AG04450 (cell line): ENCODE measurements at regions of chr22 and their contacts with region 1.

Region 1: GRCh38 chr22:36065775-36066559 is 37.3 kb upstream of the RBFOX2 start:
- DNase-seq: peak; percentile 87
- H3K4me3 ChIP-seq: peak overlapping the region; percentile 65
- H3K27ac ChIP-seq: peak overlapping the region; percentile 78
- H3K27me3 ChIP-seq: no peaks in the 10 kb centered on the region
- CTCF ChIP-seq: peak; percentile 96

Region 2: GRCh38 chr22:35627264-35628041 is 438.5 kb before region 1 on chr22:
- CTCF ChIA-PET with region 1: interaction called, 12 read pairs
- POLR2A ChIA-PET with region 1: interaction called, 3 read pairs
- DNase-seq: peak; percentile 66
- H3K4me3 ChIP-seq: peak overlapping the region; percentile 65
- H3K27ac ChIP-seq: peak overlapping the region; percentile 85
- H3K27me3 ChIP-seq: no peaks in the 10 kb centered on the region
- CTCF ChIP-seq: peak; percentile 52

Region 3: DNA sequence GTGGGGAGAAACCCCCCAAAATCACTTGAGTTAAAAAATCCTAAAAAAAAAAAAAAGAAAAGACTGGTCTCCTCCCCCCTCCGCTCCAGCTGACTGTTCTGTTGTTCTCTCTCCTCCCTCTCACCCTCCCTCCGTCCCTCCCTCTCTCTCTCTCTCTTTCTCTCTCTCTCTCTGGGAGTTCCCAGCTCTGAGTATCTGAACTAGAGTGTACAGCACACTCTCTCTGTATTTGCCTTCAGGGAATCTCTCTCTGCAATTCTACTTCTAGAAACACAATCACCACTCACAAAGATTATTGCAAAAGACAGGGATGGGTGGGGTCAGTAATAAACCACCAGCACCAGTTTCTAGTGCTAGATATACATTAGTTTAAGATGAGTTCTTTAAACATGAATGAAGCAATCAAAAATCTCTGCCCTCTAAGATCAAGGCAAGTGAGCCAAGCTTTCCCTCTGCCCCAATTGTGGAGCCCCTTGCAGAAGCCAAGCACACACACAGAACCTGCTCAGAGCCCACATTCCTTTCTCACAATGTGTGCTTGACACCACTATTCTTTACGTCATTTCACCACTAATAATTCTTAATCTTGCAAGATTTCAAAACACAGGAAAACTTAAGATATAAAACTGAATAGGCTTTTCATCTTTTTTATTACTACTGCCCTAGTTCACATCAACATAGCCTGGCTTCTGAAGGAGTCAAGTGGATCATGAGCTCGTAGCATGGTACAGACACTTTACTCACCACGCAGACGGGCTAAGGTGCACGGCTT is 170.8 kb before region 1 on chr22:
- CTCF ChIA-PET with region 1: interaction called, 25 read pairs
- POLR2A ChIA-PET with region 1: interaction called, 4 read pairs
- DNase-seq: peak; percentile 29
- H3K4me3 ChIP-seq: no peak overlapping the region
- H3K27ac ChIP-seq: no peak overlapping the region
- H3K27me3 ChIP-seq: no peaks in the 10 kb centered on the region
- CTCF ChIP-seq: no peak

Region 4: GRCh38 chr22:35938226-35938625 is 127.7 kb before region 1 on chr22:
- CTCF ChIA-PET with region 1: interaction called, 37 read pairs
- POLR2A ChIA-PET with region 1: no interaction called
- DNase-seq: no peak
- H3K4me3 ChIP-seq: no peak overlapping the region
- H3K27ac ChIP-seq: no peak overlapping the region
- H3K27me3 ChIP-seq: no peaks in the 10 kb centered on the region
- CTCF ChIP-seq: no peak

Region 5: GRCh38 chr22:35995772-35996171 is 70.2 kb before region 1 on chr22:
- CTCF ChIA-PET with region 1: interaction called, 28 read pairs
- POLR2A ChIA-PET with region 1: interaction called, 7 read pairs
- DNase-seq: peak; percentile 98
- H3K4me3 ChIP-seq: peak overlapping the region; percentile 35
- H3K27ac ChIP-seq: peak overlapping the region; percentile 85
- H3K27me3 ChIP-seq: no peaks in the 10 kb centered on the region
- CTCF ChIP-seq: no peak

Region 6: DNA sequence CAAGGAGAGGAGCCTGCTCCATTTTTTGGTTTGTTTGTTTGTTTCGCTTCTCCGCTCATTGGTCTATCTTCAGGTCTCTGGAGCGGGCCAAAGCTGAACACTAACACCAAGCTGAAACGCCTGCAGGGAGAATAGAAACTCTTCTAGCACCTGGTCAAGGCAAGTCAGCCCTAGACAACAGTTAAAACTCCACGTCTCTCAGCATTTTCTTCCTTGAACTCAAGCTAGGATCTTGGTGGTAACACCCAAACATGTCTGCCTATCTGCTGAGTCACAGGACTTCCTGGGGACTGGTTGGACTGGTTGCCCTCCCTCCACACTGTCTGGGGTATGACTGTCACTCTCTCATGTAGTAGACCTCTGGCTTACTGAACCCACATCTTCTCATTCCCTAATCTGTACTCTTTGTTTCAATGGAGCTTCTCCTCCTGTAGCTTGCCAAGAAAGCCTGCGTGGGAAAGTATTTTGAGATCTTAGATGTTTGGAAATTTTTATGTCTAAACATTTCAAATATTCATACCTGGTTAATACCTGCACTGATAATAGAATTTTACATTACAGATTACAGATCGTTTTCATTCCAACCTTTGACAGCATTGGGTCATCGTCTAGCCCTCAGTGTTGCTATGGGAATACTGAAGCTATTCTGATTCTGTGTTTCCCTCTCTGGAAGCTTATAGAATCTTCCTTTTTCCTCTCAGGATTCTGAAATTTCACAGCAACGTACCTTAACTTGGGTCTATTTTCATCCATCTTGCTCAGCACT is 13.3 kb before region 1 on chr22:
- CTCF ChIA-PET with region 1: interaction called, 100 read pairs
- POLR2A ChIA-PET with region 1: interaction called, 3 read pairs
- DNase-seq: no peak
- H3K4me3 ChIP-seq: no peak overlapping the region
- H3K27ac ChIP-seq: no peak overlapping the region
- H3K27me3 ChIP-seq: no peaks in the 10 kb centered on the region
- CTCF ChIP-seq: no peak

Region 7: DNA sequence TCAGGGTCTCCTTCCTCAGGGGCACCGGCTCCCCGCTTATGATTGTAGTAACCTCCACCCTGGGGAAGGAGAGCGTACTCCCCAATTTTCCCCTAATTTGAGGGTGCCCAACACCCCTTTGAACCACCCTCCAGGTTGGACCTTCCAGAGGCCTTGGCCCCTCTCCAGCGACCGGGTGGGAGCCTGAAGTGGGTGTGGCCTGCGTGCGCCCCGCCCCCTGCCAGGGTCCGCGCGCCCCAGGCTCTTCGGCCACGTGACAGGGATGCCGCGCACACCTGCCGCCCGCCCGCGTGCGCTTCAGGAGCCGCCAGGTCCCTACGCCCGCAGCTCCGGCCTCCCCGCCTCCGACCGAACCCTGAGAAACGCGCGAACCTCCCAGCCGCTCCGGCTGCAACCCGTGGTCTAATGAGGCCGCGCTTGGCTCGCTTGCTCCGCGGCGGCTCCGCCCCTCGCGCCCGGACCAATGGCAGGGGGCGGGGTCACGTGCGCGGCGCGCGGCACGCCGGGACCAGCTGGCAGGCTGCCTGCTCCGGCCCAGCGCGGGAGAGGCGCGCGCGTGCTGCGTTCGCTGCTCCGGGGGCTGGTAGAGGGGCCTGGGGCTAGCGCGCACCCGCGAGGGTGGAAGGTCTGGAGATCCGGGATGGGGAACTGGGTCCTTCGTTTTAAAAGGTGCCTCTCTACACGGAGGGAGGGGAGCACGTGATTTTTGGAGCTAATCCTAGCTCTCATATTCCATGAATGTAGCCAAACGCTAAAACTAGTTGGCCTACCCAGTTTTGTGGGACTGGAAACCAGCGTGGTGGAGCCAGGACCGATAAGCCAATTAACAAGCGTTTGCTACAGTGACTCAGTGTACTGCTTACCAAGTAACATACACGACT is 440.9 kb after region 1 on chr22 and contains the start of gene FOXRED2:
- CTCF ChIA-PET with region 1: no interaction called
- POLR2A ChIA-PET with region 1: no interaction called
- DNase-seq: peak; percentile 41
- H3K4me3 ChIP-seq: peak within 1 kb of the TSS; percentile 61
- H3K27ac ChIP-seq: peak within 1 kb of the TSS; percentile 31
- H3K27me3 ChIP-seq: no peaks in the 10 kb centered on the region
- CTCF ChIP-seq: no peak
- polyA plus RNA-seq, gene FOXRED2: 2.4 and 3.3 TPM in 2 replicates